ENCODE measurements at regions of chr17 and their contacts with region 1.

Region 1: DNA sequence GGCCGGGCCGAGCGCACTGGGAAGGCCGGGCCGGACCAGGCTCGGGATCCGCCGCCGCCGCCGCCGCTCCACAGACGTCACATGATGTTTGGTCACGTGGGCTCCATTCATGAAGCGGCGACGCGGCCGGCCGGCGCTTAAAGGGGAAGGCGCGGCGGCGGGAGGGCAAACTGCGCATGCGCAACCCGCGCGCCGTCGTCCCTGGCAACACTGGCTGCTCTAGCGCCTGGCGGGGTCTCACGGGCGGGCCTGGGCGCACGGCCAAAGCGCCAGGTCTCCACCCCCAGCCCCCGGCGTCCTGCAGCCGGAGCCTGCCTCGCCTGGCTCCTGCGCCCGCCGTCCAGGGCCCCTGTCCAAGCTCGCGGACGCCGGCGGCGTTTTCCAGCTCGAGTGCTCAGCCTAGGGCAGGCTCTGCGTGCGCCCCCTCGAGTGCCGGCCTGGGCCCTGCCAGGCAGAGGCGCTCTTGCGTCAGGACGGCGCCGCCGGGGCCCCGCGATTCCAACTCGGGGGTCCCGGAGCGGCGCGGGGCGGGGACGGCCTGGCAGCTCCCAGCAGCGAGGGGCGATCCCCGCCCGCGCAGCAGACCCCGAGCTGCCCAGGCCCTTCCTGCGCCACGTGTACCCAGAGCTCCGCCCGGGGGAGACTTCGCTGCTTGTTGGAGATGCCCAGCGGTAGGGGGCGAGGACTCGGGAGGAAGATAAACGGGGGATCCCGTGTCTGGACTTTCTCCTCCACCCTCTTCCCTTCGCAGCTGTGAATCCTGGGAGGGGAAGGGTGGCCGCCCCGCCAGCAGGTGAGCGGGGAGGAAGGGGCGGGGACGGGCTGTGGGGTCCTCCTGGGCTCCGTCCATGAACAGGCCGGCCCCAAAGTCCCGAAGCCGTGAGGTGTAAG is at the start of gene MAFG:
- DNase-seq: peak; percentile 86 to 98 (median 92)
- ATAC-seq: peak; percentile 47
- H3K4me3 ChIP-seq: peak within 1 kb of the TSS; percentile 81
- H3K27ac ChIP-seq: peak within 1 kb of the TSS; percentile 98
- H3K4me1 ChIP-seq: peaks cover 42 to 95% of the 10 kb centered on the region in 2 experiments
- H3K27me3 ChIP-seq: no peaks in the 10 kb centered on the region
- CTCF ChIP-seq: peak; percentile 60 to 85 (median 64)
- EP300 ChIP-seq: no peak
- POLR2A ChIP-seq: no peak
- RAD21 ChIP-seq: peak; percentile 40 to 55
- polyA plus RNA-seq, gene MAFG: 1.1 to 2.8 TPM

Region 2: GRCh38 chr17:81911277-81911961 is 16.5 kb before region 1 on chr17 and contains the start of gene PCYT2:
- CTCF ChIA-PET with region 1: interaction called, 3 read pairs
- POLR2A ChIA-PET with region 1: interaction called, 46 read pairs
- in situ Hi-C with region 1: no loop called
- intact Hi-C with region 1: no loop called
- DNase-seq: peak; percentile 92 to 99 (median 97)
- ATAC-seq: peak; percentile 95
- H3K4me3 ChIP-seq: peak within 1 kb of the TSS; percentile 93
- H3K27ac ChIP-seq: peak within 1 kb of the TSS; percentile 78
- H3K4me1 ChIP-seq: peaks cover 34 to 90% of the 10 kb centered on the region in 2 experiments
- H3K27me3 ChIP-seq: no peaks in the 10 kb centered on the region
- CTCF ChIP-seq: peak in 1 of 3 experiments; percentile 15; a peak in 2 of 6 replicates
- EP300 ChIP-seq: no peak
- POLR2A ChIP-seq: peak; percentile 42; the same call in 1 of the 2 replicates
- RAD21 ChIP-seq: no peak
- polyA plus RNA-seq, gene PCYT2: 0.92 to 1.6 TPM

Region 3: DNA sequence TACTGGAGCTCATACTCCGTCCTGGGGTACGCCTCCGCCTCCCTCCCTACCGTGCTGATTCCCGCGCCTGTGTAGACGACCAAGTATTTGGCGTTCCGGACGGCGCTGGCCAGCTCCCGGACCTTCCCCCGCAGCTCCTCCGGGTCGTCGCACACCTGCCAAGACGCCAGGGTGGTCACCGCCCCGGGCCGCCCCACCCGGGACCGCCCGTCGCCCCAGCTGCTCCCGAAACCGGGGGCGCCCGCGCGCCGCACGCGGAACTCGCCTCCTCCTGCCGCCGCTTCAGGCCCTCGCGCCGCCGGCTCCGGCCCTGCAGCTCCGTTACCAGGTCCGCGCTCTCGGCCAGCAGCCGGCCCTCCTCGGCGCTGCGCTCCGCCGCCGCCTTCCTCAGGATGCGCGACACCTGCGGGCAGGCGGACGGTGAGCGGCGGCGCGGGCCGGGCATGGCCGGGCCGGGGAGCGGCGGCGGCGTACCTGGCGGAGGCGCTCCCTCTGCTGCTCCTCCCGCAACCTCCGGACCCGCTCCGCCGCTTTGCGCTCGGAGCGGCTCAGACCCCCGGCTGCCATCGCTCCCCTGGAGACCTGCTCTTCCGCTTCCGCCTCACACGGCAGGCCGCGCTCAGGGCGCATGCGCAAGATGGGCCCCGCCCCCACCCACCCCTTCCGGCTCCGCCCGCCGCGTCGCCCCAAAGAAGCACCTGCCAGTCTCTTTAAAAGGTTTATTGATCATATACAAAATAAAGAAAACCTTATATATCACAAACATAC is 10.1 kb before region 1 on chr17 and contains the start of gene SIRT7:
- CTCF ChIA-PET with region 1: interaction called, 3 read pairs
- POLR2A ChIA-PET with region 1: interaction called, 46 read pairs
- in situ Hi-C with region 1: no loop called
- intact Hi-C with region 1: no loop called
- DNase-seq: peak; percentile 88 to 96 (median 90)
- ATAC-seq: peak; percentile 70
- H3K4me3 ChIP-seq: peak within 1 kb of the TSS; percentile 91
- H3K27ac ChIP-seq: peak within 1 kb of the TSS; percentile 69
- H3K4me1 ChIP-seq: peaks cover 43 to 91% of the 10 kb centered on the region in 2 experiments
- H3K27me3 ChIP-seq: no peaks in the 10 kb centered on the region
- CTCF ChIP-seq: no peak
- EP300 ChIP-seq: no peak
- POLR2A ChIP-seq: no peak; the same call in none of the 2 replicates
- RAD21 ChIP-seq: 0 out of 4 replicates have a peak, but pooled peaks of 1 of the 2 experiments have one; percentile 17
- polyA plus RNA-seq, gene SIRT7: 1.6 to 2.0 TPM

Region 4: DNA sequence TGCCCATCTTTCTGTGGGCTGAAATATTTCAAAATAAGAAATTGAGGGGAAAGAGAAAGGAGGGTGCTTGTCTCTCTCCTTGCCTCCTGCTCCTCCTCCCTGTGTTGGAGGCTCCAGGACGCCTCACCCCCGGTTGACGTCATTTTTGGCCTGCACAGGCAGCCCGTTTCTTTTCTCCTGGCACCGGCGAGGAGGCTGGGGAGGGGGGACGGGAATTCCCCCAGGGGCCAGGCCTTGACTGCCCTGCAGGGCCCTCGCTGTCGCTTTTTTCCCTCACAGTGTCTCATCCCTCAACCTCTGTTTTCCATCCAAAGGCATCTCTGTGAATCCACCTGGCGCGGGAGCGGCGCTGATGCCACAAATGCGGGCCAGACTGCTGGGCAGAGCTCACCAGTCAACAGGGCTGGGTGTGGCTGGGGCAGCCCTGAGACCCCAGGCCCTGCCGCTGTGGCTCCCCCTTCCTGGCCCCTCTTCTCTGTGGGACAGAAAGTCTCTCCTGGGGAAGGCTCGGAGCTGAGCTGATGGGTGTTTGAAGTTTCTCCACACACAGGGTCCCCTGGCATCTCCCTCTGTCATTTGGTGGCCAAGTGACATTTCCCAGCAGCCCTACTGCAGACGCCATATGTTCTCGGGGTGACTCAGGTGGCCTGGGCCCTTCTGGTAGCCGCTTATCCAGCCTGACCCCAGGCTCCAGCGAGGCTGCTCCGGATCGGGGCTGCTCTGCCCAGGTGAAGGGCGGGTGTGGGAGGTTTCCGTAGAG is 78.8 kb after region 1 on chr17:
- CTCF ChIA-PET with region 1: no interaction called
- POLR2A ChIA-PET with region 1: no interaction called
- in situ Hi-C with region 1: no loop called
- intact Hi-C with region 1: no loop called
- DNase-seq: no peak
- ATAC-seq: no peak
- H3K4me3 ChIP-seq: no peak overlapping the region
- H3K27ac ChIP-seq: no peak overlapping the region
- H3K4me1 ChIP-seq: peaks cover 0 to 71% of the 10 kb centered on the region in 2 experiments; a peak in 1 of 5 replicates
- H3K27me3 ChIP-seq: no peaks in the 10 kb centered on the region
- CTCF ChIP-seq: no peak
- EP300 ChIP-seq: no peak
- POLR2A ChIP-seq: no peak
- RAD21 ChIP-seq: no peak

Region 5: DNA sequence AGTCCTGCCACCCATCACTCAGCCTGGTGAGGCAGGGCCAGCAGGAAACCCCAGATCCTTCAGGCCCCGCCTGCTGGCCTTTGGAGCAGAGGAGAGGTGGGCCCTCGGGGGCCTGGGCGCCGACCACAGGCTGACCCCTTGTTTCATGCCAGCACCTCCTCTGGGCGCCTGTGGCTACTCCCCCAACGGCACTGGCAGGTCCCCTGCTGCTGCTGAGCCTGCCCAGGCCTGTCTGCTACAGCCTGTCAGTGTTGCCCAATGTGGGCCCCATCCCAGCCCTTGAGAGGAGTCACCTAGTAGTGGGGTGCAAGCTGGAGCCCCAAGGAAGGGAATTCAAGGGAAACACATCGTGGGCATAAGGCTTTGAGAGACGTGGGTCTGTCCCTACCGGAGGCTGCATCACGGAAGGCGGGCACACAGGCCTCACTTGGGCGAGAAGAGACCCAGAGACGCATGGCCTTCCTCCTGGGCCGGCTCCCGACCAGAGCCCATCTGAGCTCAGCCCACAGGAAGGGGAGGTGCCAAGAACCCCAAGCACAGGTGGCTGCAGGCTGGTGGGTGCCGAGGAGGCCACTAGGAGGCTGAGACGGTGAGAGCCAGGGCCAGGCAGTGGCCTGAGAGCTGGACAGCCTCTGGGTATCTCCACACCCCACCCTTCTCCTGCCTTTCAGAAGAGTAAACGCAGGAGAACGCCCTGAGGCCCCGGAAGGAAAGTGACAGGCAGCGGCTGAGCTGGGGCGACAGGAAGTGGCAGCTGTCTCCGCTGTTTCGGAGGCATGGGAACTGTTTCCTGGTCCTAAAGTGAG is 178.2 kb after region 1 on chr17:
- CTCF ChIA-PET with region 1: no interaction called
- POLR2A ChIA-PET with region 1: no interaction called
- in situ Hi-C with region 1: no loop called
- intact Hi-C with region 1: no loop called
- DNase-seq: peak; percentile 48 to 67 (median 58)
- ATAC-seq: peak; percentile 79
- H3K4me3 ChIP-seq: no peak overlapping the region
- H3K27ac ChIP-seq: peak overlapping the region; percentile 44; the same call in 1 of the 3 replicates
- H3K4me1 ChIP-seq: peaks cover 22 to 74% of the 10 kb centered on the region in 2 experiments
- H3K27me3 ChIP-seq: no peaks in the 10 kb centered on the region
- CTCF ChIP-seq: peak; percentile 32 to 46 (median 45); a peak in 4 of 6 replicates
- EP300 ChIP-seq: no peak
- POLR2A ChIP-seq: no peak
- RAD21 ChIP-seq: peak; percentile 30 to 48; a peak in 2 of 4 replicates

Measured in K562 (cell line).